PC-9 (cell line): ENCODE measurements at regions of chr22 and their contacts with region 1.

Region 1: GRCh38 chr22:36387752-36388518 is at the start of gene MYH9:
- DNase-seq: peak; percentile 98 to 100
- H3K4me3 ChIP-seq: peak within 1 kb of the TSS; percentile 96
- H3K27ac ChIP-seq: peak within 1 kb of the TSS; percentile 79
- H3K4me1 ChIP-seq: peaks cover 34% of the 10 kb centered on the region
- H3K27me3 ChIP-seq: no peaks in the 10 kb centered on the region
- CTCF ChIP-seq: no peak
- total RNA-seq, gene MYH9: 758 and 776 TPM in 2 replicates

Region 2: DNA sequence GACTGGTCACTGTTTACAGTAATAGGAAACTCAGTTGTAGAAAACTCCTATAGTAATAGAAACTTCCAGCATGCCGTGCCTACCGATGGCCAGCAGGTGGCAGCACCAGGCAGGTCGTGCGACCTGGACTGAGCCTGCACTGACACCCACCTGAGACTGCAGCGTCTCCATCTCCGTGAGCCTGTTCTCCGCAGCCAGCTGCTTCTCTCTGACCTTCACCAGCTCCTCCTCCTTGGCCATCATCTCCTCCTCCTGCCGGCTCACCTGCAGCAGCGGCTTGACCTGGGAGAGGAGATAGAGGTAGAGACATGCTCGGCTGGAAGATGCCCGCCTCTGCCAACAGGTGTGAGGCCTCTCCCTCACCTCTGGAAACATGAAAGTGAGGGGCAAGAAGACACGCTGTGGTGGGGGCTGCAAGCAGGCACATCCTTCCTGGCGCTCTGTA is 86.5 kb before region 1 on chr22:
- CTCF ChIA-PET with region 1: no interaction called
- POLR2A ChIA-PET with region 1: interaction called, 4 read pairs
- intact Hi-C with region 1: loop called (anchors 1 kb)
- DNase-seq: peak; percentile 64 to 84
- H3K4me3 ChIP-seq: no peak overlapping the region
- H3K27ac ChIP-seq: no peak overlapping the region
- H3K4me1 ChIP-seq: peaks cover 21% of the 10 kb centered on the region
- H3K27me3 ChIP-seq: no peaks in the 10 kb centered on the region
- CTCF ChIP-seq: peak; percentile 100

Region 3: DNA sequence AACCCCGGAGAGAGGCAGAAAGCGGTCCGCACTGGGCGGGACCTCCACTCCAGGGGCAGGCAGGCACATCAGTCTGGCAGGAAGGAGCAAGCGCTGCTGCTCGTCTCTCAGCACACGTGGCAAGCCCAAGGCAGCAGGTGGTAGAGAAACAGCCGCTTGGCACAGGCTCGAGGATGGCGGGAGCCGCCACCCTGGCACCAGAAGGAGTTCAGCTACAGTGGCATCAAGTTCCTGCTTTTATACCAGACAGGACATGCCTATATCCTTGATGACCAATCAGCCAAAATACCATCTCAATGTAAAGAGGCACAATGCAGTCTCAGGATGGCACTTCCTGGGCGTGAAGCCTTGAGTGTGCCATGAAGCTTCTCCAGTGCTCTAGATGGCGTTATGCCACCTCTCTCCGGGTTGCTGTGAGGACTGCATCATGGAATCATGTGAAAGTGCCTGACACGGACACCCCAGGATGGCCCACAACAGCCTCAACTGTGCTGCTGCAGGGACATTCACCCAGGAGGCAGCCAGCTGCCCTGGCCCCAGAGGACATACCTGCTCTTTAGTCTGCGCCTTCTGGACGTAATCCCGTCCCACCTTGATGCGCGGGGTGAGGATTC is 70.2 kb before region 1 on chr22:
- CTCF ChIA-PET with region 1: no interaction called
- POLR2A ChIA-PET with region 1: no interaction called
- intact Hi-C with region 1: no loop called
- DNase-seq: no peak
- H3K4me3 ChIP-seq: no peak overlapping the region
- H3K27ac ChIP-seq: no peak overlapping the region; the same call in 1 of the 2 replicates
- H3K4me1 ChIP-seq: no peaks in the 10 kb centered on the region
- H3K27me3 ChIP-seq: no peaks in the 10 kb centered on the region
- CTCF ChIP-seq: no peak

Region 4: DNA sequence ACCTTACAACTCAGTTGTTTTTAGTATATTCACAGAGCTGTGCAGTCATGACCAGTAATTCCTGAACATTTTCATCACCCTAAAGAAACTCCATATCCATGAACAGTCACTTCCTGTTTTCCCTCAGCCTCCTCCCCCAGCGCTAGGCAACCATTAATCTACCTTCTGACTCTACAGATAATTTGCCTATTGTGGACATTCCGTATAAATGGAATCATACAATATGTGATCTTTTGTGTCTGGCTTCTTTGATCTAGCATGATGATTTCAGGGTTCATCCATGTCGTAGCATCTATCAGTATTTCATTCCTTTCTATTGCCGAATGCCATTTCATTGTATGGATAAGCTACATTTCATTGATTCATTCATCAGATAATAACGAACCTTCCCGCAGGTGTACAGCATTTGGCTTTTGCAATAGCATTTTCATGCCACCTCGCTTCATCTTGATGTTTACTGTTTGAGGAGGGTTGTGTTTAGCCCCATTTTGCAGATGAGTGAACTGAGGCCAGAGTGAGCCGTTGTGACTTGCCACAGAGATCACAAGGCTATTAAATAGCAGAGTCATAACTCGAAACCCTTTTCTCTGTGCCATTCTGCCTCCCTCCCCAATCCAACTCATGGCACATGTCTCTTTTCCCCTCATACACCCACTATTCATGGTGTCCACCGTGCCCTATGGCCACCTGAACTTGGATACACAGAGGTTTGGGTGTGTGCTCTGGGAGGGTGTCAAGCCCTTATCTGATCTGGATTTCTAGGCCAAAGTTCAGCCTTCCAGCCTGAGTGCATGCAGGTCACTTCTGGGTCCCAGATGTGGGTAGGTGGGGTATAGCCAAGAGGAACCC is 10.9 kb after region 1 on chr22:
- CTCF ChIA-PET with region 1: no interaction called
- POLR2A ChIA-PET with region 1: interaction called, 8 read pairs
- intact Hi-C with region 1: loop called (anchors 1 kb)
- DNase-seq: peak; percentile 45 to 91
- H3K4me3 ChIP-seq: no peak overlapping the region
- H3K27ac ChIP-seq: peak overlapping the region; percentile 78
- H3K4me1 ChIP-seq: peaks cover 76% of the 10 kb centered on the region
- H3K27me3 ChIP-seq: no peaks in the 10 kb centered on the region
- CTCF ChIP-seq: no peak

Region 5: GRCh38 chr22:36439481-36440271 is 51.7 kb after region 1 on chr22:
- CTCF ChIA-PET with region 1: no interaction called
- POLR2A ChIA-PET with region 1: interaction called, 11 read pairs
- intact Hi-C with region 1: no loop called
- DNase-seq: peak; percentile 58 to 78
- H3K4me3 ChIP-seq: no peak overlapping the region
- H3K27ac ChIP-seq: peak overlapping the region; percentile 2
- H3K4me1 ChIP-seq: peaks cover 42% of the 10 kb centered on the region
- H3K27me3 ChIP-seq: no peaks in the 10 kb centered on the region
- CTCF ChIP-seq: no peak

Region 6: GRCh38 chr22:36461669-36462649 is 74.0 kb after region 1 on chr22:
- CTCF ChIA-PET with region 1: no interaction called
- POLR2A ChIA-PET with region 1: interaction called, 5 read pairs
- intact Hi-C with region 1: loop called (anchors 1 kb)
- DNase-seq: peak; percentile 96 to 99
- H3K4me3 ChIP-seq: no peak overlapping the region
- H3K27ac ChIP-seq: peak overlapping the region; percentile 72
- H3K4me1 ChIP-seq: peaks cover 92% of the 10 kb centered on the region
- H3K27me3 ChIP-seq: no peaks in the 10 kb centered on the region
- CTCF ChIP-seq: no peak